Right ventricle myocardium inferior (tissue), 1 donor: ENCODE measurements at regions of chr15 and their contacts with region 1.

Region 1: DNA sequence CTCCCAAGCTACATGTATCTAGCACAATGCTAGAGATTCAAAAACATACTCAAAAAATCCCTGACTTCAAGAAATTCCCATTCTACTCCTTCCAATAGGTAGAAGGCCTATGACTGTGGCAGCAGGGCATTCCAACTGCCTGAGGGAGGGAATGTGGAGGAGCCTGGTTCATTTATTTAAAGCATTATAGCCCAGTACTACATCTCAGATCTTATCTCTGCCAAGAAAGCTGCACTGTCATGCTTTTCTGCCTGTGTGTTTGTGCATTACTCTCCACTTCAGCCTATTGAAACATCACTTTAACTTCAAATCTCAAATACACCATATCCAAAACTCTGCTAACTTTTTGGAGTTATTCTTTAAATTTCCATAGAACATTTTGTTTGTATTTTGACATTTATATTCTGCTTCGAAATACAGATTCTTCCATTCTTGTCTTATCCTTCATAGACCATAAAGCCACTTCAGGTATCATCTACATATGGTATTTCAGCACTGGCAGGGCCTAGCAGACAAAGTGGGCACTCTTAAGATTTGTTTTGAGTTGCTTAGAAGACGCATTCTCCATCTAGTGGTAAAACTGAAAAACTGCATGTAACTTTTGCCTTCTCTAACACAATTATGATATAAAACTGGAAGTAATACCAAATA is 59.1 kb upstream of the NEDD4 start:
- DNase-seq: no peak
- ATAC-seq: no peak

Region 2: GRCh38 chr15:56086566-56086965 is 34.0 kb after region 1 on chr15:
- intact Hi-C with region 1: loop called (anchors 2 kb)
- DNase-seq: no peak
- ATAC-seq: no peak